ENCODE measurements at regions of chr2 and their contacts with region 1.

Region 1: DNA sequence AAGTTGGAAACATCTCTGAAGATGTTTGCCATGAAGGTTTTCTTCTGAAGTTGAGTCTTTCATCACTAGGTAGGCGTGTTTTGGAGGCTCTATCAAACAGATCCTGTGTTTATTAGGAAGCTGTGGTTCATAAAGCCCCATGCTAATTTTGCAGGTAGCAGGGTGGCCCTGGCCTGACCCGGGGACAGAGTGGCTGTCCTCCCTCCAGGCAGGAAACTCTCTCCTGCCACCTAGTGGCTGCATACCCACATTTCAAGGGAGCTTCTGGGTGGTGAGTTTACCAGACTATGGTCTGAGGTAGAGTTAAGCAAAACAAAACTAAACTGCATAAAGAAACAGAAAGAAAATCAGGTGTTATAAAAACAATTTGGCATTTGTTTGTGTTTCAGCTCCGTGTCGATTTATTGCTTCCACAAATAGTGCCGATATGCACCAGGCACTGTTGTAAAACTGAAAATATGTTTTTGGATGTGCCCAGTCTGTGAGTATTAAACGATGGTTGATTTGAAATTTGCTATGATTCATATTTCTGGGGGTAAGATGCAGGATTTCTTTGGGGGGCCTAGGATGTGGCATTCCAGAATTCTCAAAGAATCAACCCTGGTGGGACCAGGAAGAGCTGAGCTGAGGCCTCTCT is 26.0 kb upstream of the IL37 start:
- H3K4me3 Mint-ChIP-seq: no peak overlapping the region
- H3K27ac Mint-ChIP-seq: no peak overlapping the region
- H3K4me1 Mint-ChIP-seq: peaks cover 65% of the 10 kb centered on the region
- H3K27me3 Mint-ChIP-seq: no peaks in the 10 kb centered on the region

Region 2: GRCh38 chr2:112749755-112750559 is 135.0 kb before region 1 on chr2:
- intact Hi-C with region 1: loop called (anchors 1 kb)
- H3K4me3 Mint-ChIP-seq: no peak overlapping the region
- H3K27ac Mint-ChIP-seq: peak overlapping the region; percentile 23
- H3K4me1 Mint-ChIP-seq: peaks cover 17% of the 10 kb centered on the region
- H3K27me3 Mint-ChIP-seq: no peaks in the 10 kb centered on the region

Region 3: DNA sequence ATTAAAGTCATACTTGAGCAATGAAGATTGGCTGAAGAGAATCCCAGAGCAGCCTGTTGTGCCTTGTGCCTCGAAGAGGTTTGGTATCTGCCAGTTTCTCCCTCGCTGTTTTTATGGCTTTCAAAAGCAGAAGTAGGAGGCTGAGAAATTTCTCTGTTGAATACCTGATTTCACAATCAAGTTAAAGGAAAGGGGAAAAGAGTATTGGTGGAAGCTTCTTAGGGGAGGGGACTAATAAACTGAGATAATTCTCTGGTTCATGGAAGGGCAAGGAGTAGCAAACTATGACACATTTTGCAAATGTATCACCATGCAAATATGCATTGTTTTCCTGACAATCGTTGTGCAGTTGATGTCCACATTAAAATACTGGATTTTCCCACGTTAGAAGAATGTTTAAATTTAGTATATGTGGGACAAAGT is 48.3 kb before region 1 on chr2 and contains the start of gene IL1B:
- intact Hi-C with region 1: loop called (anchors 5 kb)
- H3K4me3 Mint-ChIP-seq: no peak within 1 kb of the TSS
- H3K27ac Mint-ChIP-seq: peak within 1 kb of the TSS; percentile 58
- H3K4me1 Mint-ChIP-seq: peaks cover 92% of the 10 kb centered on the region
- H3K27me3 Mint-ChIP-seq: peaks cover 5% of the 10 kb centered on the region

Region 4: DNA sequence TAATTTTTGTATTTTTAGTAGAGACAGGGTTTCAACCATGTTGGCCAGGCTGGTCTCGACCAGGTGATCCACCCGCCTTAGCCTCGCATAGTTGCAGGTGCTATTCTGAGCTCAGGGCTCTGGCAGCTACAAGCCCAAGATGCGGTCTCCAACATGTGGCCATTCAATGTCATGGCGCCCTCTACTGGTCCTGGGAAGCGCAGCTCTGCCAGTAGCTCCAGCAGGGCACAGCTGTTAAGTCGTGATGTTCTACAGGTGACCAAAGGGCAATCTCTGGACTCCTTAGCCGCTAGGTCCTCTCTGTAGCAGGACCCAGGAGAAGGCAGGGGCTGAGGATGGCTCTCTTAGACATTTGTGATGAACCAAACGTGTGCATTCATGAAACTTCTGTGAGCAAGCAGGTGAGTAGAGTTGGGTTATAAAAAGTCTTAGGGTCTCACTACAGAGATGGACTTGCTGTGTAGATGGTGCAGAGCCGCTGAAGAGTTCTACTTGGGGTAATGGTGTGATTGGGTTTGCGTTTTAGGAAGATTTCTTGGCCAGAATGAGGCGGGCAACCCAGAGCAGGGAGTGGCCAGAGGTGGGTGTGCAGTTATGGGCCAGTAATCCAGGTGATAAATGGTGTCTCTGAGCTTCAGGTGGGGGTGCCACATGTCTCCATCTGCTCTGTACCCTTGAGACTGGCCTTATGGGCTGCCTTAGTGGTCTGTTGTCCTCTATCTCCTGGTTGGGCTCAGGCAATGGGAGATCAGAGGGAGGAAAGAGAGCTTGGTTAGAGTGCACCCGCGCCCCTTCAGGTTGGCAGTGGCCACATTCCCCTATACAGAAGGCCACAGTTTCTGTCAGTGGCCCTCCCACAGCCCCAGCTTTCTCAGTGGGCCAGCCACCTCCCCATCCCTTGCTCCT is 57.0 kb after region 1 on chr2:
- intact Hi-C with region 1: loop called (anchors 5 kb)
- H3K4me3 Mint-ChIP-seq: no peak overlapping the region
- H3K27ac Mint-ChIP-seq: no peak overlapping the region
- H3K4me1 Mint-ChIP-seq: peaks cover 13% of the 10 kb centered on the region
- H3K27me3 Mint-ChIP-seq: peaks cover 5% of the 10 kb centered on the region

Region 5: DNA sequence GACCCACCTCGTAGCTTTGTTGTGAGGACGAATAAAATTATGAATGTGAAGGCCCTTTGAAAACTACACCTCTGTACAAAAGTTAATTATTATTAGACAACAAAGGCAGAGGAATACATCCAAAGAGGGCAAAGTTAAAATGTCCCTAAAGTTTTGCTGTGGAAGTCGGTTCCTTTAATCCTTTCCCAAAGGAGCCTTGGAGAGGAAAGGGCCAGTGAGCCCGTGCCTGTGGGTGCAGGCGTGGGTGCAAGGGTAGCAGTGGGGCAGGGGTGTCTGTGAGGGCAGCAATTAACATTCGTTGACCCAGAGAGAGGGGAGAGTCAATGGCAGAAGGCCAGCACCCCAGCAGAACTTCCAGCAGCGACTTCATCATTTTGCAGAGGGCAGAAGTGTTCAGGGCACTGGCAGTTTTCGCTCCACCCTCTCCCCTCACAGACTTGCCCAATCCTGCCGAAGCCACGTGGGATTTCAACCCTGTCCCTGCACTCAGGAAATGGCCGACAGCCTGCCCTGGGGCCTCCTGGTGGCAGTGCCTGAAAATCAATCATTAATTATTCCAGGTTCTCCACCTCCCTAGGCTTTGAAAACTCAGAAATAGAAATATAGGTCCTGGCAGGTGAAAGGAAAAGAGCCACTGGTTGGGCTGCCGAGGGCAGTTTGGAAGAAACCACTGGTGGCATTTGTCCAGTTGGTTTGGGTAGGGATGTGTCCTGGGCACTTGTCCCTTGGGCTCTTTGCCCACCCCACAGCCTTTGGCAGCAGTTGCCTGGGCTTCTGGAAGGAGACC is 398.0 kb after region 1 on chr2:
- intact Hi-C with region 1: no loop called
- H3K4me3 Mint-ChIP-seq: no peak overlapping the region
- H3K27ac Mint-ChIP-seq: peak overlapping the region; percentile 33
- H3K4me1 Mint-ChIP-seq: peaks cover 14% of the 10 kb centered on the region
- H3K27me3 Mint-ChIP-seq: peaks cover 30% of the 10 kb centered on the region